HepG2 (cell line): ENCODE measurements at regions of chr5 and their contacts with region 1.

Region 1: DNA sequence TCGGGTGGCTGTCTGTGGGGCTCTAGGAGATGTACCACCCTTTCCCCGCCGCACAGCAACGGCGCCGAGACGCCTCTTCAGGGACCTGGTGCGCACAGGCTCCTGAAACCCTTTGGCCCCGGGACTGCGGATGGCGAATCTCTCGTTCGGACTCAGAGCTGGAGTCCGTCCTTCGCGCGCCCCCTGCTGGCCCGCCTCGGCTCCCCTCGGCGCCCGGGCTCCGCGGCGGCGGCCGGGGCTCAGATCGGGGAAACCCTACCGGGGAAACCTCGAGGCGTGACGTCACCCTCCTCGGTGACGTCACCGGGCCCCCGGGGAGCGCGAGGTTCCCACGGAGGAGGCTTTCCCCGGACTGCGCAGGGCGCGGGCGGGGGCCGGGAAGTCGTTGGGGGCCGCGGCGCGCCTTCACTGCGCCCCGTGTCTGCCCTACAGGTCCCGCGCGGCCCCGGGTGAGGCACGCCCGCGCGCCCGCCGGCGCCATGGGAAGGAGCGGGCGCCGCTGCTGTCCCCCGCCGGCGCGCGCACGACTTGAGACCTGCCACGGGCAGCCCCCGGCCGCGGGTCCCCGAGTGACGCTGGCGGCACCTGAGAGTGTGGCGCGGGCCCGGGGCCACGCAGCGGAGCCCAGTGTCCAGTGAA is 7.9 kb downstream of the PRR7 start:
- DNase-seq: peak; percentile 79
- ATAC-seq: peak; percentile 54
- H3K4me3 ChIP-seq: peak overlapping the region; percentile 81 to 89 (median 87)
- H3K27ac ChIP-seq: peak overlapping the region; percentile 84
- H3K4me1 ChIP-seq: peaks cover 35% of the 10 kb centered on the region
- H3K27me3 ChIP-seq: no peaks in the 10 kb centered on the region; a peak in 1 of 5 replicates
- CTCF ChIP-seq: peak; percentile 85
- EP300 ChIP-seq: no peak
- POLR2A ChIP-seq: 0 out of 4 replicates have a peak, but pooled peaks of 1 of the 2 experiments have one; percentile 23
- RAD21 ChIP-seq: peak; percentile 97

Region 2: DNA sequence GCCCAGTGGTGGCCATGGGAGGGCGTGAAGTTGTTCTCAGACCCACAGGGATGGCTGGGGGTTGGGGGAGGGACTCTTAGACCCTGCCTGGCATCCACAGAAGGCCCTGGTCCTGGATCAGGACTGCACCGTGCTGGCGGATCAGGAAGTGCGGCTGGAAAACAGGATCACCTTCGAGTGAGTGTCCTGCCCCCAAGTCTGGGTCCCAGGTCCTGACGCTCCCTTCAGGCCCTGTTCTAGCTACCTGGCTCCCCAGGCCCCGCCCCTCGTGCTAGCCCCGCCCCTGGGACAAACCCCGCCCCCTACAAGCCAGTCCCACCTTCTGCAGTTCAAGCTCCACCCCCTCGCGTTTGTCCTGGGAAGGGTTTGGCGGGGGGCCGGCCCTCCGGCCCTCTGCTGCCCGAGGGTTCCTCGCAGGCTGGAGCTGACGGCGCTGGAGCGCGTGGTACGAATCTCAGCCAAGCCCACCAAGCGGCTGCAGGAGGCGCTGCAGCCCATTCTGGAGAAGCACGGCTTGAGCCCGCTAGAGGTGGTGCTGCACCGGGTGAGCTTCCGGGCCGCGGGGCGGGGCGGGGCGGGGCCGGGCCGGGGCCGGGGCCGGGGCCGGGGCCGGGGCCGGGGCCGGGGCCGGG is 83.9 kb before region 1 on chr5:
- CTCF ChIA-PET with region 1: no interaction called
- POLR2A ChIA-PET with region 1: interaction called, 12 read pairs
- in situ Hi-C with region 1: no loop called
- intact Hi-C with region 1: loop called (anchors 2 kb)
- DNase-seq: peak; percentile 94
- ATAC-seq: peak; percentile 82
- H3K4me3 ChIP-seq: peak overlapping the region in 2 of 3 experiments; percentile 74 to 92; a peak in 3 of 6 replicates
- H3K27ac ChIP-seq: peak overlapping the region; percentile 35
- H3K4me1 ChIP-seq: peaks cover 74% of the 10 kb centered on the region
- H3K27me3 ChIP-seq: no peaks in the 10 kb centered on the region; a peak in 1 of 5 replicates
- CTCF ChIP-seq: peak; percentile 92
- EP300 ChIP-seq: no peak
- POLR2A ChIP-seq: no peak
- RAD21 ChIP-seq: peak; percentile 95

Region 3: DNA sequence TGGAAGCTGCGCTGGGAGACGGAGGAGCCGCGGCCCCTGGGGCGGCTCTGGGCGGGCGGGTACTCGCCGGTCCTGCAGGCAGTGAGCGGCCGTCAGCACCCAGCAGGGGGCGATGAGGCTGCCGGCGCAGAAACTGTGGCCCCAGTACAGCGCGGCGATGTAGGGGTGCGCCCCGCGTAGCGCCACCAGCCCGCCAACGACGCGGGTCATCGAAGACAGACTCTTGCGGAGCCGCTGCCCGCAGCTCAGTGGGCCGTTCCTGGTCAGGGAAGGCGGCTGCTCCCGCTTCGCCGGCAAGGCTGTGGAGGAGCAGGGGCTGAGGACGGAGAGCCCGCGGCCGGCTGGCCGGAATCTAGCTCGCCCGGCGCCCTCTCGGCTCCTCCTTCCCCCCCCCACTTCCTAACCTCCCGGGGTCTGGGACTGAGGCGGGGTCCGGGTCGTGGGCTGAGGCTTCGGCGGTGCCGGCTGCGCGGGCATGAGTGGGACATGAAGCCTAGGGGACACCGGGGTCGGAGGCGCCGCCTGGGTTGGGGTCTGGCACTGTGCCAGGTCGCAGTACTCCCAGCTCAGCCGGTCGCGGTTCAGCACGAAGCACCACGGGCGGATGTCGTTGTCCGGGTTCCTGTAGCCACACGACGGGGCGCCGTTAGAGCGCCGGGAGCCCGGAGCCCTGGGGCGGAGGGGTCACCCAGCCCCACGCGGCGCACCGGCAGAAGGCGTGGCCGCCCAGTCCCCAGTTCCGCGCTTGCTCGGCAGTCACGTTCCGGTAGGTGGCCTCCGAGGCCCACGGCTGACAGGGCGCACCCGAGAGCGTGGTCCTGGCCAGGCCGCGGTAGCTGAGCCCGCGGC is 50.5 kb before region 1 on chr5:
- CTCF ChIA-PET with region 1: interaction called, 35 read pairs
- POLR2A ChIA-PET with region 1: interaction called, 10 read pairs
- in situ Hi-C with region 1: no loop called
- intact Hi-C with region 1: loop called (anchors 1 kb)
- DNase-seq: no peak
- ATAC-seq: peak; percentile 91
- H3K4me3 ChIP-seq: peak overlapping the region; percentile 30 to 70 (median 59); a peak in 5 of 6 replicates
- H3K27ac ChIP-seq: no peak overlapping the region
- H3K4me1 ChIP-seq: peaks cover 20% of the 10 kb centered on the region
- H3K27me3 ChIP-seq: no peaks in the 10 kb centered on the region
- CTCF ChIP-seq: peak; percentile 86
- EP300 ChIP-seq: no peak
- POLR2A ChIP-seq: no peak
- RAD21 ChIP-seq: peak; percentile 80

Region 4: GRCh38 chr5:177473461-177474001 is 19.0 kb after region 1 on chr5 and contains the start of gene DBN1:
- CTCF ChIA-PET with region 1: no interaction called
- POLR2A ChIA-PET with region 1: interaction called, 17 read pairs
- in situ Hi-C with region 1: no loop called
- intact Hi-C with region 1: no loop called
- DNase-seq: no peak
- ATAC-seq: peak; percentile 26
- H3K4me3 ChIP-seq: peak within 1 kb of the TSS; percentile 65 to 77 (median 73)
- H3K27ac ChIP-seq: no peak within 1 kb of the TSS
- H3K4me1 ChIP-seq: peaks cover 63% of the 10 kb centered on the region
- H3K27me3 ChIP-seq: no peaks in the 10 kb centered on the region
- CTCF ChIP-seq: no peak
- EP300 ChIP-seq: no peak
- POLR2A ChIP-seq: peak in 1 of 2 experiments; percentile 50; a peak in 1 of 4 replicates
- RAD21 ChIP-seq: no peak
- total RNA-seq, gene DBN1: 15.7 and 37.3 TPM in 2 replicates

Region 5: GRCh38 chr5:177497292-177498033 is 42.9 kb after region 1 on chr5 and contains the start of gene PDLIM7:
- CTCF ChIA-PET with region 1: interaction called, 14 read pairs
- POLR2A ChIA-PET with region 1: interaction called, 16 read pairs
- in situ Hi-C with region 1: no loop called
- intact Hi-C with region 1: loop called (anchors 2 kb)
- DNase-seq: peak; percentile 94
- ATAC-seq: peak; percentile 77
- H3K4me3 ChIP-seq: peak within 1 kb of the TSS; percentile 65 to 85 (median 68)
- H3K27ac ChIP-seq: peak within 1 kb of the TSS; percentile 75
- H3K4me1 ChIP-seq: peaks cover 57% of the 10 kb centered on the region
- H3K27me3 ChIP-seq: peaks cover 0 to 29% of the 10 kb centered on the region in 2 experiments; a peak in 3 of 5 replicates
- CTCF ChIP-seq: peak; percentile 27; the same call in 1 of the 2 replicates
- EP300 ChIP-seq: no peak
- POLR2A ChIP-seq: peak in 1 of 2 experiments; percentile 87; a peak in 2 of 4 replicates
- RAD21 ChIP-seq: no peak
- total RNA-seq, gene PDLIM7: 17.7 and 21.1 TPM in 2 replicates